ENCODE measurements at regions of chr14 and their contacts with region 1.

Region 1: GRCh38 chr14:75427482-75428229 is at the start of gene JDP2:
- DNase-seq: peak; percentile 83
- H3K4me3 ChIP-seq: peak within 1 kb of the TSS; percentile 62 to 63
- H3K27ac ChIP-seq: peak within 1 kb of the TSS; percentile 81 to 83
- H3K4me1 ChIP-seq: peaks cover 9% of the 10 kb centered on the region
- H3K27me3 ChIP-seq: no peaks in the 10 kb centered on the region
- CTCF ChIP-seq: peak in 2 of 4 experiments; percentile 20 to 28
- POLR2A ChIP-seq: peak; percentile 64
- total RNA-seq, gene JDP2: 27.1 to 34.0 TPM

Region 2: GRCh38 chr14:75399821-75400678 is 27.6 kb before region 1 on chr14:
- intact Hi-C with region 1: loop called (anchors 2 kb)
- DNase-seq: peak; percentile 98
- H3K4me3 ChIP-seq: no peak overlapping the region
- H3K27ac ChIP-seq: peak overlapping the region; percentile 10 to 45
- H3K4me1 ChIP-seq: peaks cover 5% of the 10 kb centered on the region
- H3K27me3 ChIP-seq: no peaks in the 10 kb centered on the region
- CTCF ChIP-seq: no peak
- POLR2A ChIP-seq: no peak

Region 3: GRCh38 chr14:75452900-75453747 is 25.5 kb after region 1 on chr14:
- intact Hi-C with region 1: loop called (anchors 2 kb)
- DNase-seq: peak; percentile 64
- H3K4me3 ChIP-seq: no peak overlapping the region
- H3K27ac ChIP-seq: peak overlapping the region; percentile 37 to 69
- H3K4me1 ChIP-seq: peaks cover 24% of the 10 kb centered on the region
- H3K27me3 ChIP-seq: no peaks in the 10 kb centered on the region
- CTCF ChIP-seq: no peak
- POLR2A ChIP-seq: no peak

Region 4: DNA sequence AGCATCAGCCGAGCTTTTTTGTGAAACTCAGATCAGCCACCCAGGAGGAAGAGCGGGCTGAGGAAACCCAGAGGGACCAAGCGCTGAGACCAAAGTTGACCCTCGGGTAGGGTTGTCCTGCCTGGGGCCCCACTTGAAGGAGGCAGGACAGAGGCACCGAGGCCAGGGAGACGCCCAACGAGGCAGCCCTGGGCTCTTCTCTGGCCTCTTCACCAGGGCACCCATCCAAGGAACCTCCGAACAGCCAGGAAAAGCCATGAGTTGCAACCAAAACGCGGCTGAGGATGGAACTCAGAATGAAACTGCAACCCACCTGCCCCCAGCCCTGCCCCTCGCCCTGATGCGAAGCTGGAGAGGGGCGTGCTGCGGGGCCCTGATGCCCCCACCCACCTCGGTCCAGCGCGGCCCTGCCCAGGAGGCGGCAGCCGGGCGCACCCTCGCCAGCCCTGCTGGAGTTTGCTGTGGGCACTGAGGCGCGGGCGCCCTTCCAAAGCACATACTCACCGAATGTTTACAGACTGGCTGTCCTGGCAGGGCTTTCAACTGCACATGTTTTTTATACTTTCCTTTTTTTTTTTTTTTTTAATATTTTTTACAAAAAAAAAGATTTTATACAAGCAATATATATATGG is 42.1 kb after region 1 on chr14:
- intact Hi-C with region 1: loop called (anchors 5 kb)
- DNase-seq: peak; percentile 88
- H3K4me3 ChIP-seq: peak overlapping the region in 1 of 2 donors; percentile 0
- H3K27ac ChIP-seq: peak overlapping the region in 1 of 2 donors; percentile 28
- H3K4me1 ChIP-seq: no peaks in the 10 kb centered on the region
- H3K27me3 ChIP-seq: no peaks in the 10 kb centered on the region
- CTCF ChIP-seq: peak in 1 of 4 experiments; percentile 7
- POLR2A ChIP-seq: no peak

Region 5: GRCh38 chr14:75560962-75561432 is 133.3 kb after region 1 on chr14:
- intact Hi-C with region 1: no loop called
- DNase-seq: peak; percentile 90
- H3K4me3 ChIP-seq: no peak overlapping the region
- H3K27ac ChIP-seq: no peak overlapping the region
- H3K4me1 ChIP-seq: no peaks in the 10 kb centered on the region
- H3K27me3 ChIP-seq: no peaks in the 10 kb centered on the region
- CTCF ChIP-seq: peak; percentile 82 to 93 (median 90)
- POLR2A ChIP-seq: no peak

Measured in prostate gland (tissue), 2 donors.